Activated CD4-positive, alpha-beta T cell treated with anti-CD3 and anti-CD28 coated beads for 36 hours (primary cell): ENCODE measurements at regions of chr12 and their contacts with region 1.

Region 1: GRCh38 chr12:124636138-124636978 is 68.9 kb upstream of the NCOR2 start:
- DNase-seq: peak; percentile 83
- ATAC-seq: peak; percentile 85
- H3K4me3 Mint-ChIP-seq: no peak overlapping the region
- H3K27ac Mint-ChIP-seq: peak overlapping the region; percentile 30
- H3K4me1 Mint-ChIP-seq: peaks cover 16% of the 10 kb centered on the region
- H3K27me3 Mint-ChIP-seq: peaks cover 5% of the 10 kb centered on the region

Region 2: DNA sequence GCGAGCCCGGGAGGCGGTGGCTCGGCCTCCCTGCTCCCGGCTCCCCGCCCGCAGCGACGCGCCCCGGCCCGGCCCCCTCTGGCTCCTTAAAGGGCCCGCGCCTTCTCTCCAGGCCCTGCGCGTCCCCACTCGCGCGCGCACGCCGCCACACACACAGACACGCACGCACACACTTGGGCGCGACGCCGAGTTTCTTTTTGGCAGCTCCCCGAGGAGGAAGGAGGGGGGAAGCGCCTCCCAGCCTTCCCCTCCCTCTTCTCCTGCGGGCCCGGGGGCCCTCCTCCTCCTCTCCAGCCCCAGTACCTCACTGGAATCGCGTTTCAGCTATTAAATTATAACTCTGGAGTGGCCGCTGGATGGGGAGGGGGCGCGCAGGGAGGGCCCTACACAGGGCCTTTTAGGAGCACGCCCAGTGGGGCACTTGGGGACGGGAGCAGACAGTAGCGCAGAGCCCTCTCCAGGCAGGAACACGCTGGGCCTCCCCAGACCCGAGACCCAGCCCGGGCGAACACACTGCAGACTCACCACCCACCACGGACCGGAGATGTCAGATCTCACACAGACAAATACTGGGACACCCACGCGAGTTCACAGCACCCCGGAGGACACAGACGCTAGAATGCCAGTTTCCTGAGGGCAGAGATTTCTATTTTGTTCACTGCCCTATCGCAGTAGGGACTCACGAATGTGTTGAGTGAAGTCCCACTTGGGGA is 68.5 kb before region 1 on chr12:
- CTCF ChIA-PET with region 1: interaction called, 3 read pairs
- POLR2A ChIA-PET with region 1: no interaction called
- intact Hi-C with region 1: loop called in 1 of 2 experiments (anchors 2 kb)
- DNase-seq: peak; percentile 89
- ATAC-seq: peak; percentile 72
- H3K4me3 Mint-ChIP-seq: peak overlapping the region; percentile 75
- H3K27ac Mint-ChIP-seq: peak overlapping the region; percentile 89
- H3K4me1 Mint-ChIP-seq: peaks cover 33% of the 10 kb centered on the region
- H3K27me3 Mint-ChIP-seq: no peaks in the 10 kb centered on the region

Region 3: DNA sequence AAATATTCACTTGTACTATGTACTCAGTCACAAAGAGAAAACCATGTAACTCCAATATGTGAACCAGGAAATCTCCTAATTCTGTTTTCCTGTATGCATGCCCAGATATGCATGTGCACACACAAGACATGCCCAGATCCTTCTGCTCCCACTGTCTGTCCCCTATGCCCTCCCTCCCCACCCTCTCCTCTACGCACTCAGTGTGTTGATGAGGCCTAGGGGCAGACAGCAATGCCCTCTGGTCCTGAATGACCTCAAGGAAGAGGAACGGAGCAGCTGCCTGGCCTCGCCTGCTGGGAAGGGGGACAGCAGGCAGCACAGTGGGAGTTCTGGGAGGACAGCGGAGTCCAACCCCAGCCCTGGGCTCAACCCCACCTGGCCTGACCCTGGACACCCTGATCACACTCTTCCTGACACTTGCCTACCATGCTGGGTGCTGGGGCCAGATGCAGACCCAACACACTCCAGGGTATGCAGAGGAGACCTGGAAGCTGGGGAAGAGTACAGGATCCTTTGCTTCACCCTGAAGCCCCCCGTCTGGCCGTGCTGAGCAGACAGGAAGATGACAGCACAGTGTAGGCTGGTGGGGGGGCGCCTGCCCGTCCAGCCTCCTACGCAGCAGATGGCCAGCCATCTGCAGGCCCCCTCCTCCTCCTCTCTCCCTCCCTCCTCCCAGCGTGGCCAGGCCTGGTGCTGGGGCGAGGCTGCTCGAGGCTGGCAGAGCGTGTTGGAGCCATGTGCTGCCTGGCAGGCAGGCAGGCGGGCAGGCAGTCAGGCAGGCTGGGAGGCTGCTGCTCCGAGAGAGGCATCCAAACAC is 37.7 kb after region 1 on chr12:
- CTCF ChIA-PET with region 1: no interaction called
- POLR2A ChIA-PET with region 1: no interaction called
- intact Hi-C with region 1: no loop called
- DNase-seq: no peak
- ATAC-seq: no peak
- H3K4me3 Mint-ChIP-seq: no peak overlapping the region
- H3K27ac Mint-ChIP-seq: no peak overlapping the region
- H3K4me1 Mint-ChIP-seq: peaks cover 3% of the 10 kb centered on the region
- H3K27me3 Mint-ChIP-seq: no peaks in the 10 kb centered on the region

Region 4: GRCh38 chr12:124684971-124685688 is 48.8 kb after region 1 on chr12:
- CTCF ChIA-PET with region 1: no interaction called
- POLR2A ChIA-PET with region 1: no interaction called
- intact Hi-C with region 1: loop called in 1 of 2 experiments (anchors 5 kb)
- DNase-seq: no peak
- ATAC-seq: peak; percentile 77
- H3K4me3 Mint-ChIP-seq: no peak overlapping the region
- H3K27ac Mint-ChIP-seq: no peak overlapping the region
- H3K4me1 Mint-ChIP-seq: peaks cover 30% of the 10 kb centered on the region
- H3K27me3 Mint-ChIP-seq: peaks cover 5% of the 10 kb centered on the region

Region 5: GRCh38 chr12:124700810-124701592 is 64.6 kb after region 1 on chr12:
- CTCF ChIA-PET with region 1: no interaction called
- POLR2A ChIA-PET with region 1: no interaction called
- intact Hi-C with region 1: no loop called
- DNase-seq: no peak
- ATAC-seq: no peak
- H3K4me3 Mint-ChIP-seq: no peak overlapping the region
- H3K27ac Mint-ChIP-seq: no peak overlapping the region
- H3K4me1 Mint-ChIP-seq: no peaks in the 10 kb centered on the region
- H3K27me3 Mint-ChIP-seq: no peaks in the 10 kb centered on the region

Region 6: DNA sequence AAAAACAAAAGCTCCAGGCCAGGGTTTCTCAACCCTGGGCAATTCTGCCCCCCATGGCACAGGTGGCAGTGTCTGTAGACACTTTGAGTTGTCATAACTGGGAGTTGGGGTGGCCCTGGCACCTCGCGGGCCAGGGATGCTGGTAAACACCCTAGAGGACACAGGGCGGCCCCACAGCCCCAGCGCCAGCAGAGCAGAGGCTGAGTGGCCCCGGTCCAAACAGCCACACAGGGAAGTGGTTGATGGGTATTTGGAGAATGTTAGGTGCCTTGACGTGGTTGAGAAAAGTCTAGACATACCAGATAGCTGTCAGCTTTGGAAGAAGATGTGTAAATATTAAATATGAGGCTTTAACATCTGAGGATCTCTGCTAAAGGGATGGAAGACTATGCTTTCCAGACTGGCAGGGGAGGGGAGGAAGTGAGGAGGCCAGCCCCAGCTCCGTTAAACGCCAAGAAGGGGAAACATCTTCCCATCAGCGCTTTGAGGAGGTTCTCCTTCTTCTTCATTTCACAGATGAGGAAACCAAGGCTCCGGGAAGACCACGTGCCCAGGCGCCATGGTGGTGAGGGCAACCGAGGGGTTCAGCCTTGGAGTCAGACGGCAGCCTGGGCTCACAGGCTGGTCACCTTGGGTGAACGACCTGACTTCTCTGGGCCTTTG is 123.6 kb after region 1 on chr12:
- CTCF ChIA-PET with region 1: interaction called, 3 read pairs
- POLR2A ChIA-PET with region 1: no interaction called
- intact Hi-C with region 1: loop called in 1 of 2 experiments (anchors 2 kb)
- DNase-seq: no peak
- ATAC-seq: no peak
- H3K4me3 Mint-ChIP-seq: no peak overlapping the region
- H3K27ac Mint-ChIP-seq: no peak overlapping the region
- H3K4me1 Mint-ChIP-seq: peaks cover 35% of the 10 kb centered on the region
- H3K27me3 Mint-ChIP-seq: peaks cover 14% of the 10 kb centered on the region